ENCODE measurements at regions of chr1 and their contacts with region 1.

Region 1: GRCh38 chr1:24964811-24965570 is 34.9 kb upstream of the RUNX3 start:
- DNase-seq: peak; percentile 62 to 94 (median 88)
- ATAC-seq: peak; percentile 96
- H3K4me3 ChIP-seq: peak overlapping the region; percentile 65
- H3K4me3 Mint-ChIP-seq: peak overlapping the region; percentile 74 to 92 (median 83)
- H3K27ac ChIP-seq: peak overlapping the region; percentile 74
- H3K27ac Mint-ChIP-seq: peak overlapping the region; percentile 89 to 97 (median 95)
- H3K4me1 ChIP-seq: peaks cover 30 to 39% of the 10 kb centered on the region in 2 donors
- H3K4me1 Mint-ChIP-seq: peaks cover 36 to 85% (median 69%) of the 10 kb centered on the region in 7 donors
- H3K27me3 ChIP-seq: no peaks in the 10 kb centered on the region
- H3K27me3 Mint-ChIP-seq: peaks cover 0 to 3% (median 0%) of the 10 kb centered on the region in 5 donors

Region 2: GRCh38 chr1:24743404-24744211 is 221.4 kb before region 1 on chr1:
- CTCF ChIA-PET with region 1: no interaction called
- POLR2A ChIA-PET with region 1: no interaction called
- intact Hi-C with region 1: no loop called
- DNase-seq: no peak
- ATAC-seq: no peak
- H3K4me3 ChIP-seq: no peak overlapping the region
- H3K4me3 Mint-ChIP-seq: peak overlapping the region; percentile 29 to 94 (median 58)
- H3K27ac ChIP-seq: no peak overlapping the region
- H3K27ac Mint-ChIP-seq: peak overlapping the region in 5 of 9 donors; percentile 46 to 80 (median 76)
- H3K4me1 ChIP-seq: peaks cover 0 to 4% of the 10 kb centered on the region in 2 donors
- H3K4me1 Mint-ChIP-seq: peaks cover 7 to 49% (median 15%) of the 10 kb centered on the region in 7 donors
- H3K27me3 ChIP-seq: no peaks in the 10 kb centered on the region
- H3K27me3 Mint-ChIP-seq: peaks cover 0 to 10% (median 0%) of the 10 kb centered on the region in 5 donors

Region 3: GRCh38 chr1:24847995-24848881 is 116.8 kb before region 1 on chr1:
- CTCF ChIA-PET with region 1: interaction called, 4 read pairs
- POLR2A ChIA-PET with region 1: no interaction called
- intact Hi-C with region 1: loop called (anchors 1 to 2 kb)
- DNase-seq: peak; percentile 77 to 91 (median 85)
- ATAC-seq: peak; percentile 94
- H3K4me3 ChIP-seq: peak overlapping the region; percentile 64
- H3K4me3 Mint-ChIP-seq: peak overlapping the region; percentile 72 to 84 (median 79)
- H3K27ac ChIP-seq: peak overlapping the region; percentile 47
- H3K27ac Mint-ChIP-seq: peak overlapping the region; percentile 9 to 80 (median 62)
- H3K4me1 ChIP-seq: peaks cover 7 to 14% of the 10 kb centered on the region in 2 donors
- H3K4me1 Mint-ChIP-seq: peaks cover 0 to 21% (median 11%) of the 10 kb centered on the region in 7 donors
- H3K27me3 ChIP-seq: no peaks in the 10 kb centered on the region
- H3K27me3 Mint-ChIP-seq: peaks cover 0 to 40% (median 0%) of the 10 kb centered on the region in 5 donors

Region 4: GRCh38 chr1:24981631-24982005 is 16.6 kb after region 1 on chr1:
- CTCF ChIA-PET with region 1: interaction called, 4 read pairs
- POLR2A ChIA-PET with region 1: interaction called, 22 read pairs
- intact Hi-C with region 1: loop called (anchors 2 kb)
- DNase-seq: peak in 3 of 9 donors; percentile 30 to 50 (median 43)
- ATAC-seq: peak; percentile 66
- H3K4me3 ChIP-seq: no peak overlapping the region
- H3K4me3 Mint-ChIP-seq: peak overlapping the region; percentile 49 to 79 (median 60)
- H3K27ac ChIP-seq: peak overlapping the region; percentile 54
- H3K27ac Mint-ChIP-seq: peak overlapping the region; percentile 7 to 92 (median 84)
- H3K4me1 ChIP-seq: peaks cover 47 to 81% of the 10 kb centered on the region in 2 donors
- H3K4me1 Mint-ChIP-seq: peaks cover 78 to 94% (median 92%) of the 10 kb centered on the region in 7 donors
- H3K27me3 ChIP-seq: no peaks in the 10 kb centered on the region
- H3K27me3 Mint-ChIP-seq: no peaks in the 10 kb centered on the region

Region 5: GRCh38 chr1:25031966-25032667 is 67.1 kb after region 1 on chr1:
- CTCF ChIA-PET with region 1: interaction called, 61 read pairs
- POLR2A ChIA-PET with region 1: interaction called, 12 read pairs
- intact Hi-C with region 1: loop called (anchors 1 kb)
- DNase-seq: peak in 7 of 9 donors; percentile 55 to 86 (median 76)
- ATAC-seq: peak; percentile 72
- H3K4me3 ChIP-seq: peak overlapping the region; percentile 0
- H3K4me3 Mint-ChIP-seq: peak overlapping the region; percentile 39 to 92 (median 74)
- H3K27ac ChIP-seq: peak overlapping the region; percentile 77
- H3K27ac Mint-ChIP-seq: peak overlapping the region in 8 of 9 donors; percentile 87 to 97 (median 93)
- H3K4me1 ChIP-seq: peaks cover 72 to 97% of the 10 kb centered on the region in 2 donors
- H3K4me1 Mint-ChIP-seq: peaks cover 56 to 78% (median 74%) of the 10 kb centered on the region in 7 donors
- H3K27me3 ChIP-seq: no peaks in the 10 kb centered on the region
- H3K27me3 Mint-ChIP-seq: no peaks in the 10 kb centered on the region

Region 6: DNA sequence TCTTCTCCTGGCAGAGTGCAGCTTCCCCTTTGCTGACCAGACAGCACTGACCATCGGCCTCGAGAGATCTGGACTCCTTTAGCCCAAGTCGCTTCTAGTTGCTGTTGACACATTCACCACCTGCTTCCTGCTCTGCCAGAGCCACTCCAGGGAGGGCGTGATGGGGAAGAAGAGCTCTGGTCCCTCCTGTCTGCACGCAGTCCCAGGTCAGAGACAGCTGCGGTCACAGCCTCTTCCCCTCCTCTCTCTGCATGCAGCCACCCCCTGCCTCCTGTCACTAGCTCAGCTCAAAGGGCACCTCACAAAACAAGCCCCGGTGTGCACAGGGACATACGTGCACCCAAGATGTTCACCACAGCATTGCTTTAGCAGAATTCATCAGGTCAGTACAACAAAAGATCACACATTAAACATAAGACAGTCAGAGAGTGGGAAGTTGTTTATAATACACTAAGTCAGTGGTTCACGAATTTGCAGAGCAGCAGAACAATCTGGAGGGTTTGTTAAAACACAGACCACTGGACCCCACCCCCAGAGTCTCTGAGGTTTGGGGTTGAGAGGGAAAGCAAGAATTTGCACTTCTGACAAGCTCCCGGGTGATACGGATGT is 134.5 kb after region 1 on chr1:
- CTCF ChIA-PET with region 1: interaction called, 8 read pairs
- POLR2A ChIA-PET with region 1: no interaction called
- intact Hi-C with region 1: loop called (anchors 1 kb)
- DNase-seq: peak in 1 of 9 donors; percentile 46
- ATAC-seq: peak; percentile 49
- H3K4me3 ChIP-seq: no peak overlapping the region
- H3K4me3 Mint-ChIP-seq: peak overlapping the region in 8 of 10 donors; percentile 2 to 77 (median 55)
- H3K27ac ChIP-seq: no peak overlapping the region
- H3K27ac Mint-ChIP-seq: peak overlapping the region in 7 of 9 donors; percentile 6 to 84 (median 61)
- H3K4me1 ChIP-seq: peaks cover 44 to 73% of the 10 kb centered on the region in 2 donors
- H3K4me1 Mint-ChIP-seq: peaks cover 33 to 74% (median 59%) of the 10 kb centered on the region in 7 donors
- H3K27me3 ChIP-seq: no peaks in the 10 kb centered on the region
- H3K27me3 Mint-ChIP-seq: peaks cover 0 to 4% (median 0%) of the 10 kb centered on the region in 5 donors

Region 7: GRCh38 chr1:25819576-25820246 is 854.7 kb after region 1 on chr1 and contains the start of gene MTFR1L:
- CTCF ChIA-PET with region 1: no interaction called
- POLR2A ChIA-PET with region 1: no interaction called
- intact Hi-C with region 1: no loop called
- DNase-seq: peak; percentile 82 to 96 (median 92)
- ATAC-seq: peak; percentile 92
- H3K4me3 ChIP-seq: peak within 1 kb of the TSS; percentile 97
- H3K4me3 Mint-ChIP-seq: peak within 1 kb of the TSS; percentile 91 to 100 (median 96)
- H3K27ac ChIP-seq: peak within 1 kb of the TSS; percentile 91
- H3K27ac Mint-ChIP-seq: peak within 1 kb of the TSS; percentile 92 to 99 (median 96)
- H3K4me1 ChIP-seq: peaks cover 19 to 28% of the 10 kb centered on the region in 2 donors
- H3K4me1 Mint-ChIP-seq: peaks cover 30 to 61% (median 46%) of the 10 kb centered on the region in 7 donors
- H3K27me3 ChIP-seq: no peaks in the 10 kb centered on the region
- H3K27me3 Mint-ChIP-seq: no peaks in the 10 kb centered on the region
- total RNA-seq, gene MTFR1L: 39.6 to 60.2 (median 42.3) TPM